Activated T-helper 1 cell treated with anti-CD3 and anti-CD28 coated beads, Interleukin-12 subunit alpha, Interleukin-12 subunit beta, Interleukin-2, Interleukin-4 antibody, amounts not matched to agents 30 ng/mL and 10 ng/mL and 1 ng/mL, durations not matched to agents 14 hours and 24 hours and 36 hours (primary cell): ENCODE measurements at regions of chr1 and their contacts with region 1.

Region 1: GRCh38 chr1:214213136-214213535 is 67.8 kb upstream of the SMYD2 start:
- DNase-seq: no peak
- H3K4me3 Mint-ChIP-seq: no peak overlapping the region
- H3K27ac Mint-ChIP-seq: no peak overlapping the region
- H3K4me1 Mint-ChIP-seq: no peaks in the 10 kb centered on the region
- H3K27me3 Mint-ChIP-seq: peaks cover 20% of the 10 kb centered on the region

Region 2: GRCh38 chr1:214261206-214262123 is 48.3 kb after region 1 on chr1:
- intact Hi-C with region 1: loop called (anchors 2 kb)
- DNase-seq: peak; percentile 69
- H3K4me3 Mint-ChIP-seq: no peak overlapping the region
- H3K27ac Mint-ChIP-seq: no peak overlapping the region
- H3K4me1 Mint-ChIP-seq: peaks cover 27% of the 10 kb centered on the region
- H3K27me3 Mint-ChIP-seq: peaks cover 42% of the 10 kb centered on the region